ENCODE measurements at regions of chr18 and their contacts with region 1.

Region 1: GRCh38 chr18:63963615-63964256 is 6.1 kb upstream of the SERPINB8 start:
- DNase-seq: peak in 28 of 35 experiments; percentile 19 to 75 (median 37)
- ATAC-seq: peak; percentile 57 to 78 (median 75)
- H3K4me3 ChIP-seq: no peak overlapping the region
- H3K4me3 Mint-ChIP-seq: no peak overlapping the region
- H3K27ac ChIP-seq: no peak overlapping the region
- H3K27ac Mint-ChIP-seq: no peak overlapping the region
- H3K4me1 ChIP-seq: no peaks in the 10 kb centered on the region
- H3K4me1 Mint-ChIP-seq: peaks cover 0 to 3% (median 0%) of the 10 kb centered on the region in 3 donors
- H3K27me3 ChIP-seq: peaks cover 2 to 3% of the 10 kb centered on the region in 2 experiments
- H3K27me3 Mint-ChIP-seq: peaks cover 13 to 29% of the 10 kb centered on the region in 2 donors

Region 2: GRCh38 chr18:63907664-63908063 is 56.1 kb before region 1 on chr18 and contains the start of gene SERPINB10:
- CTCF ChIA-PET with region 1: no interaction called
- POLR2A ChIA-PET with region 1: no interaction called
- DNase-seq: no peak
- ATAC-seq: no peak
- H3K4me3 ChIP-seq: no peak within 1 kb of the TSS
- H3K4me3 Mint-ChIP-seq: no peak within 1 kb of the TSS
- H3K27ac ChIP-seq: no peak within 1 kb of the TSS
- H3K27ac Mint-ChIP-seq: no peak within 1 kb of the TSS
- H3K4me1 ChIP-seq: no peaks in the 10 kb centered on the region
- H3K4me1 Mint-ChIP-seq: no peaks in the 10 kb centered on the region
- H3K27me3 ChIP-seq: peaks cover 0 to 4% of the 10 kb centered on the region in 2 experiments
- H3K27me3 Mint-ChIP-seq: peaks cover 9 to 28% of the 10 kb centered on the region in 2 donors
- total RNA-seq, gene SERPINB10: not detected

Region 3: GRCh38 chr18:63974991-63975390 is 11.3 kb after region 1 on chr18:
- CTCF ChIA-PET with region 1: interaction called, 19 to 21 read pairs
- POLR2A ChIA-PET with region 1: no interaction called
- DNase-seq: peak in 7 of 35 experiments; percentile 7 to 54 (median 19)
- ATAC-seq: no peak
- H3K4me3 ChIP-seq: no peak overlapping the region
- H3K4me3 Mint-ChIP-seq: no peak overlapping the region
- H3K27ac ChIP-seq: no peak overlapping the region
- H3K27ac Mint-ChIP-seq: no peak overlapping the region
- H3K4me1 ChIP-seq: peaks cover 0 to 14% of the 10 kb centered on the region in 2 experiments
- H3K4me1 Mint-ChIP-seq: peaks cover 25 to 42% (median 34%) of the 10 kb centered on the region in 3 donors
- H3K27me3 ChIP-seq: no peaks in the 10 kb centered on the region
- H3K27me3 Mint-ChIP-seq: no peaks in the 10 kb centered on the region

Region 4: GRCh38 chr18:63986885-63987284 is 23.1 kb after region 1 on chr18:
- CTCF ChIA-PET with region 1: interaction called, 4 to 10 read pairs
- POLR2A ChIA-PET with region 1: no interaction called
- DNase-seq: no peak
- ATAC-seq: no peak
- H3K4me3 ChIP-seq: no peak overlapping the region
- H3K4me3 Mint-ChIP-seq: no peak overlapping the region
- H3K27ac ChIP-seq: no peak overlapping the region
- H3K27ac Mint-ChIP-seq: no peak overlapping the region
- H3K4me1 ChIP-seq: no peaks in the 10 kb centered on the region
- H3K4me1 Mint-ChIP-seq: no peaks in the 10 kb centered on the region
- H3K27me3 ChIP-seq: no peaks in the 10 kb centered on the region
- H3K27me3 Mint-ChIP-seq: no peaks in the 10 kb centered on the region

Region 5: DNA sequence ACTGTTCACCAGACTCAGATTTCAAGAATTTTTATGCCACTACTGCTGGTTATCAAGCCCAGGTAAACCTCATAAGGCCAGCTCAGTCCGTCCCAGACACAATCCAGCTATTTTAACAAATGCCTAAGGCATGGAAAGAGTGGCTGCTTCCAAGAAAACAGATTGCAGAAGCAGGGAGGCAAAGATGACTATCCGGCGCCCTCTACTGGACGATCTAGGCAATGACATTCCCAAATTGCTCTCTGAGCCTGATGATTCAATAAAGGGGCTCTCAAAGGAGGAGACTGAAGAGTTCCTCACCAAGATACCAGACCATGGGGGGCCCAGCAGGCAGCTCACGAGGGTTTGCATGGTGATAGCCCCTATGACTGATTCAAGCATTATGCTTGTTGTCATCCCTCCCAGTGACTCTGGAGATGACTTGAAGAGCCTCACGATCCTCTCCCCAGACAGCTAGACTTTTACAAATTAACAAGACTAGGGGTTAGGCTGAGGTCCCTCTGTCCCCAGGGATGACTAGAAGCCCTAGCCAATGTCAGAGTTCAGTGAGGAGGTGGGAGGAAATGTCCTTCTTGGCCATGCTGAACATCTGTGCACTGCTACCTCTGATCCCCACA is 31.2 kb after region 1 on chr18:
- CTCF ChIA-PET with region 1: interaction called, 4 to 12 read pairs
- POLR2A ChIA-PET with region 1: no interaction called
- DNase-seq: peak in 18 of 35 experiments; percentile 4 to 58 (median 24)
- ATAC-seq: no peak
- H3K4me3 ChIP-seq: no peak overlapping the region
- H3K4me3 Mint-ChIP-seq: no peak overlapping the region
- H3K27ac ChIP-seq: no peak overlapping the region
- H3K27ac Mint-ChIP-seq: no peak overlapping the region
- H3K4me1 ChIP-seq: no peaks in the 10 kb centered on the region
- H3K4me1 Mint-ChIP-seq: peaks cover 0 to 7% (median 5%) of the 10 kb centered on the region in 3 donors
- H3K27me3 ChIP-seq: no peaks in the 10 kb centered on the region
- H3K27me3 Mint-ChIP-seq: no peaks in the 10 kb centered on the region

Region 6: GRCh38 chr18:64009305-64009704 is 45.6 kb after region 1 on chr18:
- CTCF ChIA-PET with region 1: no interaction called
- POLR2A ChIA-PET with region 1: no interaction called
- DNase-seq: no peak
- ATAC-seq: no peak
- H3K4me3 ChIP-seq: no peak overlapping the region
- H3K4me3 Mint-ChIP-seq: no peak overlapping the region
- H3K27ac ChIP-seq: no peak overlapping the region
- H3K27ac Mint-ChIP-seq: no peak overlapping the region
- H3K4me1 ChIP-seq: no peaks in the 10 kb centered on the region
- H3K4me1 Mint-ChIP-seq: no peaks in the 10 kb centered on the region
- H3K27me3 ChIP-seq: no peaks in the 10 kb centered on the region
- H3K27me3 Mint-ChIP-seq: peaks cover 3% of the 10 kb centered on the region in 2 donors